ENCODE measurements at regions of chr7 and their contacts with region 1.

Region 1: DNA sequence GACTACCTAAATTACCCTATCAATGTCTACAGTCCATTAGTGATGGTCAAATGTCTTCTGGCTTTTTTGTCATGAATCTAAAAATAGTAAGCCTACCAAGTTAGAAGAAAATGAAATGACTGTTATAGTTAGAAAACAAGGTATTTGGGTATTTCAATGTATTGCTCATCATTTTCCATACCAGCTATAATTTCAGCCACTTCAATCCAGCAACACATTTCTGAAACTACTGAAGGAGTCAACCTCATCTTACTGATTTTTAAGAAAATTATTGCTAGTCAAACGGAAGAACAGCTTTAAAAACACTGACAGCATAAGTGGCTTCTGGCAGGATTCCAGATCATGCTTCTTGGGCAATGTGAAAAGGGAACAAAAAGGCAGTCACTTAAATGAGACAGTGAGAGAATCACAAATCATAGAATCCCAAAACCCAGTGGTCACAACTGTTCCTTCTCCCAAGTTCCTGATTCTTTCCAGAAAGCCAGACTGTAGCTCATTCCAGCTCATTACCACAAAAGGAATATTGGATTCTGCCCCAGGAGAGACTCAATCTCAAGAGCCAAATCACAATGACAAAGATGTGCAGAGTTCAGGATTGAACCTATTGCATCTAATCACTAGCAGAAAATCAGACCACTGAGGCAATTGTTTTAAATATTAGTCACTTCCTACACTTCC is 61.2 kb upstream of the LRRN3 start:
- DNase-seq: peak in 22 of 35 experiments; percentile 4 to 67 (median 24)
- ATAC-seq: peak in 2 of 4 experiments; percentile 22 to 25
- H3K4me3 ChIP-seq: peak overlapping the region in 1 of 2 donors; percentile 15
- H3K4me3 Mint-ChIP-seq: peak overlapping the region in 2 of 3 donors; percentile 4 to 52
- H3K27ac ChIP-seq: no peak overlapping the region
- H3K27ac Mint-ChIP-seq: peak overlapping the region; percentile 87 to 91
- H3K4me1 ChIP-seq: peaks cover 3 to 59% of the 10 kb centered on the region in 2 experiments
- H3K4me1 Mint-ChIP-seq: peaks cover 52 to 64% (median 52%) of the 10 kb centered on the region in 3 donors
- H3K27me3 ChIP-seq: no peaks in the 10 kb centered on the region
- H3K27me3 Mint-ChIP-seq: no peaks in the 10 kb centered on the region

Region 2: DNA sequence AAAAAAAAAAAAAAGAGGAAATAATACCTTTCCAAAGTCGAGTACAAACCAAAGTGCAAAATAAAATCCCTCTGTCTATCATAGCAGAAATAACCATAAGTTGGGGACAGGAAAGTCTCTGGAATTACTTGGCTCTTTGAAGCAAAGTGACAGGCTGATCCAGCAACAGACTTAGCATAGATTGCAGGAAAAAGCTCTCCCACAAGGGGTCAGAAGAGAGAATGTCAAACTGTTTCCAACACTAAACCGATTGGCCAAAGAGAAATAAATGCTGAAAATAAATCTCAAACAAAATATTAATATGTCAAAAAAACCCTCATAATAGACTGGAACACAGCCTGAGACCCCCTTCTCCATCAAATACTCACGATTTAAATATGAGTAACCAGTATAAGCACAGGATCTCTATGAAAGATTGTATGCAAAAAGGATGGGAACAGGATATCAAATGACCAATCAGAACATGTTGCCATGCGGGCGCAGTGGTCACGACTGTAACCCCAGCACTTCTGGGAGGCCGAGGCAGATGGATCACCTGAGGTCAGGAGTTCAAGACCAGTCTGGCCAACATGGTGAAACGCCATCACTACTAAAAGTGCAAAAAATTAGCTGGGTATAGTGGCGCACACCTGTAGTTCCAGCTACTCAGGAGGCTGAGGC is 939.5 kb before region 1 on chr7:
- CTCF ChIA-PET with region 1: interaction called in 1 of 2 experiments, 13 read pairs
- POLR2A ChIA-PET with region 1: no interaction called
- DNase-seq: peak in 3 of 35 experiments; percentile 1 to 37 (median 1)
- ATAC-seq: no peak
- H3K4me3 ChIP-seq: no peak overlapping the region
- H3K4me3 Mint-ChIP-seq: no peak overlapping the region
- H3K27ac ChIP-seq: no peak overlapping the region
- H3K27ac Mint-ChIP-seq: no peak overlapping the region
- H3K4me1 ChIP-seq: no peaks in the 10 kb centered on the region
- H3K4me1 Mint-ChIP-seq: no peaks in the 10 kb centered on the region
- H3K27me3 ChIP-seq: no peaks in the 10 kb centered on the region
- H3K27me3 Mint-ChIP-seq: peaks cover 0 to 15% of the 10 kb centered on the region in 2 donors

Region 3: GRCh38 chr7:110877016-110877415 is 152.7 kb before region 1 on chr7:
- CTCF ChIA-PET with region 1: no interaction called
- POLR2A ChIA-PET with region 1: interaction called in 1 of 2 experiments, 14 read pairs
- DNase-seq: no peak
- ATAC-seq: no peak
- H3K4me3 ChIP-seq: no peak overlapping the region
- H3K4me3 Mint-ChIP-seq: no peak overlapping the region
- H3K27ac ChIP-seq: no peak overlapping the region
- H3K27ac Mint-ChIP-seq: no peak overlapping the region
- H3K4me1 ChIP-seq: peaks cover 0 to under 1% of the 10 kb centered on the region in 2 experiments
- H3K4me1 Mint-ChIP-seq: peaks cover 0 to 2% (median 2%) of the 10 kb centered on the region in 3 donors
- H3K27me3 ChIP-seq: no peaks in the 10 kb centered on the region
- H3K27me3 Mint-ChIP-seq: no peaks in the 10 kb centered on the region

Region 4: GRCh38 chr7:111006691-111007090 is 23.0 kb before region 1 on chr7:
- CTCF ChIA-PET with region 1: no interaction called
- POLR2A ChIA-PET with region 1: no interaction called
- DNase-seq: no peak
- ATAC-seq: no peak
- H3K4me3 ChIP-seq: no peak overlapping the region
- H3K4me3 Mint-ChIP-seq: no peak overlapping the region
- H3K27ac ChIP-seq: no peak overlapping the region
- H3K27ac Mint-ChIP-seq: no peak overlapping the region
- H3K4me1 ChIP-seq: peaks cover 4 to 45% of the 10 kb centered on the region in 2 experiments
- H3K4me1 Mint-ChIP-seq: peaks cover 27 to 40% (median 31%) of the 10 kb centered on the region in 3 donors
- H3K27me3 ChIP-seq: no peaks in the 10 kb centered on the region
- H3K27me3 Mint-ChIP-seq: no peaks in the 10 kb centered on the region